Activated naive CD4-positive, alpha-beta T cell treated with anti-CD3 and anti-CD28 coated beads for 36 hours (primary cell): ENCODE measurements at regions of chr16 and their contacts with region 1.

Region 1: GRCh38 chr16:50548125-50548908 is at the start of gene NKD1:
- DNase-seq: peak; percentile 68
- H3K4me3 Mint-ChIP-seq: peak within 1 kb of the TSS; percentile 85
- H3K27ac Mint-ChIP-seq: no peak within 1 kb of the TSS
- H3K4me1 Mint-ChIP-seq: peaks cover 18% of the 10 kb centered on the region
- H3K27me3 Mint-ChIP-seq: no peaks in the 10 kb centered on the region
- total RNA-seq, gene NKD1: 2.6 to 3.2 TPM

Region 2: DNA sequence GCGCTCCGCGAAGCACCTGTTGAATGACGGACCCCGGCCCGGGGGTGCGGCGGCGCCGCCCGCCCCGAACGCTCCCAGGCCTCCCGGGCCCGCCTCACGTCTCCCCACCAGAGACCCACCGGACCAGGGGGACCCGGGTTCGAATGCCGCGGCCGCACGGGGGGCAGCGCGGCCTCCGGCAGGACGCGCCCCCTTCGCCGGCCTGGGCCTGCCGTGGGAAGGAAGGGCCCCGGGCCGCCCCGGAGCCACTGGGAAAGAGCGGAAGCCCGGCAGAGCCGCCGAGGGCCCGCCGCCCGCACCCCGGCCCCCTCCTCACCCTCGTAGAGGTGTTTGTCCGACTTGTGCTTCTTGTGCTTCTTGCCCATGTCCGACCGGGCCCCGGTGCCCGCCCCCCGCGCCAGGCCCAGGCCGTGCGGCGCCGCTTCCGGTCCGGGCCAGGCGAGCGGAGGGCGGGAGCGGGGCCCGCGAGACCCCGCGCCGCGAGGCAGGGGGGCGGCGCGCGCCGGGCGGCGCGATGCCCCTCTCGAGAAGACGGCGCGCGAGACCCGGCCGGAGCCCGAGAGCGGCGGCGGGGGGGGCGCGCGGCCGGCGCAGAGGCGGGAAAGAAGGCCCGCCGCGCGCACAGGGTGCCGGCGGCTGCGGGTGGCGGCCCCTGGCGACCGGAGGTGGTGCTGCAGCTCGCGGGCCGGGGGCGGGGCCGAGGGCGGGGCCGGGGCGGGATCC is 179.7 kb before region 1 on chr16 and contains the start of gene BRD7:
- CTCF ChIA-PET with region 1: interaction called, 3 read pairs
- intact Hi-C with region 1: loop called (anchors 1 kb)
- DNase-seq: peak; percentile 62
- H3K4me3 Mint-ChIP-seq: peak within 1 kb of the TSS; percentile 96
- H3K27ac Mint-ChIP-seq: peak within 1 kb of the TSS; percentile 86
- H3K4me1 Mint-ChIP-seq: peaks cover 46% of the 10 kb centered on the region
- H3K27me3 Mint-ChIP-seq: no peaks in the 10 kb centered on the region
- total RNA-seq, gene BRD7: 96.7 to 101 TPM

Region 3: GRCh38 chr16:50585331-50585776 is 37.0 kb after region 1 on chr16:
- CTCF ChIA-PET with region 1: no interaction called
- intact Hi-C with region 1: loop called (anchors 2 kb)
- DNase-seq: no peak
- H3K4me3 Mint-ChIP-seq: no peak overlapping the region
- H3K27ac Mint-ChIP-seq: no peak overlapping the region
- H3K4me1 Mint-ChIP-seq: peaks cover 34% of the 10 kb centered on the region
- H3K27me3 Mint-ChIP-seq: no peaks in the 10 kb centered on the region

Region 4: DNA sequence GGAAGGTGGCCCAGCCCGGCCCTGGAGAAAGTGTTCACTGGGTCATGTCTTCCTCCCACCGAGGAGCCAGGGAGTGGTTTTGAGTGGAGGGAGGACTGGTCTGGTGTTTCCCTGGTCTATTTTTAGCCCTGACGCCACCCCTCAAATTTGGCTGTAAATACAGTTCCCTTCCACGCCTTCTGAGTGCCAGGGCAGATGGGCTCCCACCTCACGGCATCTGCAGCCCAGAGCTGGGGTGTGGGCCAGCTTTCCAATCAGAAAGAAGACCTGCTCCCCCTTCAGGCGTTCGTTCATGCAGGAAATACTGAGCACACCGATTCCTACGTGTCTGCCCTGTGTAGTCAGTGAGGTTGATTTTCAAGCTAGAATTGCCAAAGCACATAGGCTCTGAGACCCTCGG is 79.1 kb after region 1 on chr16:
- CTCF ChIA-PET with region 1: interaction called, 3 read pairs
- intact Hi-C with region 1: loop called (anchors 1 kb)
- DNase-seq: peak; percentile 75
- H3K4me3 Mint-ChIP-seq: no peak overlapping the region
- H3K27ac Mint-ChIP-seq: peak overlapping the region; percentile 35
- H3K4me1 Mint-ChIP-seq: peaks cover 38% of the 10 kb centered on the region
- H3K27me3 Mint-ChIP-seq: no peaks in the 10 kb centered on the region

Region 5: GRCh38 chr16:50741808-50742575 is 193.7 kb after region 1 on chr16 and contains the start of gene CYLD:
- CTCF ChIA-PET with region 1: no interaction called
- intact Hi-C with region 1: loop called (anchors 1 kb)
- DNase-seq: peak; percentile 100
- H3K4me3 Mint-ChIP-seq: peak within 1 kb of the TSS; percentile 90
- H3K27ac Mint-ChIP-seq: peak within 1 kb of the TSS; percentile 96
- H3K4me1 Mint-ChIP-seq: peaks cover 42% of the 10 kb centered on the region
- H3K27me3 Mint-ChIP-seq: no peaks in the 10 kb centered on the region
- total RNA-seq, gene CYLD: 70.8 to 71.9 TPM